Transverse colon (tissue), 4 donors: ENCODE measurements at regions of chr11 and their contacts with region 1.

Region 1: DNA sequence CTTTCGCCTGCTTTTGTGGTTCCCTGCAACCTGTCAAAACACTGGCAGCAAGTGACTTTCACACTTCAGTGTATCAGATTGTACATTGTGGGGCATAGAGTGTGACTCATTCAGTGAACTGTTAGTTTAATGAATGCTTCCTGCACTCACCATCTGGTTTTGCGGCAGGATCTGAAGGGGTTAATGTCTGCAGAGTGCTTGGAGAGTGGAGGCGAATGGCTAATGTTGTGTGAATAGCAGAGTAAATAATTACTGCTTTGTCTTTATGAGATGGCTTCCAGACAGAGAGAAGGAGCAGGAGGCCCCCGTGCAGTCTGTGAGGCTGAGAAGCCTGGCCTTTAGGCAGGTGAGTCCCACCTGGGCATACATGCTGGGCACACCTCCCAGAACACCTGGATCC is 454.3 kb upstream of the KIRREL3 start:
- DNase-seq: no peak
- H3K4me3 ChIP-seq: no peak overlapping the region
- H3K27ac ChIP-seq: no peak overlapping the region
- H3K4me1 ChIP-seq: no peaks in the 10 kb centered on the region
- H3K27me3 ChIP-seq: no peaks in the 10 kb centered on the region
- CTCF ChIP-seq: no peak
- EP300 ChIP-seq: no peak
- POLR2A ChIP-seq: no peak

Region 2: GRCh38 chr11:127485541-127485940 is 30.7 kb after region 1 on chr11:
- in situ Hi-C with region 1: no loop called
- intact Hi-C with region 1: loop called (anchors 1 kb)
- DNase-seq: no peak
- H3K4me3 ChIP-seq: no peak overlapping the region
- H3K27ac ChIP-seq: no peak overlapping the region
- H3K4me1 ChIP-seq: no peaks in the 10 kb centered on the region
- H3K27me3 ChIP-seq: no peaks in the 10 kb centered on the region
- CTCF ChIP-seq: no peak
- EP300 ChIP-seq: no peak
- POLR2A ChIP-seq: no peak

Region 3: DNA sequence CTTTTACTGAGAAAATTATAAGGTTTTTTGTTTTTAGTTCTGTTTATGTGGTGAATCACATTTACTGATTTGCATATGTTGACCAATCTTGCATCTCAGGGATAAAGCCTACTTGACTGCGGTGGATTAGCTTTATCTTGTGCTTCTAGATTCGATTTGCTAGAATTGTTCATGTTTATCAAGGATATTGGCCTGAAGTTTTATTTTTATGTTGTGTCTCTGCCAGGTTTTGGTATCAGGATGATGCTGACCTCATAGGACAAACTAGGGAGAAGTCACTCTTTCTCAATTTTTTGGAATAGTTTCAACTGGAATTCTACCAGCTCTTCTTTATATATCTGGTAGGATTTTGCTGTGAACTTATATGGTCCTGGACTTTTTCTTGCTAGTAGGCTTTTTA is 627.7 kb after region 1 on chr11:
- in situ Hi-C with region 1: no loop called
- intact Hi-C with region 1: no loop called
- DNase-seq: no peak
- H3K4me3 ChIP-seq: no peak overlapping the region
- H3K27ac ChIP-seq: no peak overlapping the region
- H3K4me1 ChIP-seq: no peaks in the 10 kb centered on the region
- H3K27me3 ChIP-seq: no peaks in the 10 kb centered on the region
- CTCF ChIP-seq: no peak
- EP300 ChIP-seq: no peak
- POLR2A ChIP-seq: no peak